Dorsolateral prefrontal cortex (tissue), 120 donors: ENCODE measurements at regions of chr2 and their contacts with region 1.

Region 1: DNA sequence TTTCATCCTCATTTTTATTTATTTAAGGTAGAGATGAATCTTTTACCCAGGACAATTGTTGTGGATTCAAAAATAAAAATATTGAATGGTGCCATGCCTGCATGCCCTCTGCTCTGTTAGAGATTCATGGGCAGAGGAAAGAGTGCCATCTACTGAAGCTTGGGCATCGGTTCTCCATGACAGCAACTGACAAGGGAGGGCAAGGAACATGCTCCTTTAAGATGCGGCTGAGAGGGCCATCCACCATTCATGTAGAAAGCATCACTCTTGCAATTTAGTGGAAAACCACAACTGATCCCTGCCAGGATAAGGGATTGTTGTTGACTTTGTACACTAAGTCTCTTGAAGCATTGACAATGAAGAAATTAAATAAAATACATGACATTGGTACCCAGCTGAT is 79.9 kb downstream of the PARD3B start:
- DNase-seq: peak in 4 of 10 donors; percentile 8 to 46 (median 36)
- H3K4me3 ChIP-seq: no peak overlapping the region
- H3K27ac ChIP-seq: no peak overlapping the region
- H3K27me3 ChIP-seq: no peaks in the 10 kb centered on the region
- CTCF ChIP-seq: peak in 51 of 56 donors; percentile 20 to 78 (median 48)

Region 2: GRCh38 chr2:204110338-204110741 is 514.8 kb before region 1 on chr2:
- intact Hi-C with region 1: loop called in 1 of 2 experiments (anchors 10 kb)
- DNase-seq: no peak
- H3K4me3 ChIP-seq: no peak overlapping the region
- H3K27ac ChIP-seq: peak overlapping the region in 2 of 59 donors; percentile 7 to 42
- H3K27me3 ChIP-seq: peaks cover 0 to 10% (median 0%) of the 10 kb centered on the region in 45 donors
- CTCF ChIP-seq: no peak

Region 3: GRCh38 chr2:204251158-204251997 is 373.8 kb before region 1 on chr2:
- intact Hi-C with region 1: loop called in 1 of 2 experiments (anchors 5 kb)
- DNase-seq: no peak
- H3K4me3 ChIP-seq: no peak overlapping the region
- H3K27ac ChIP-seq: no peak overlapping the region
- H3K27me3 ChIP-seq: peaks cover 0 to 7% (median 0%) of the 10 kb centered on the region in 45 donors
- CTCF ChIP-seq: no peak

Region 4: DNA sequence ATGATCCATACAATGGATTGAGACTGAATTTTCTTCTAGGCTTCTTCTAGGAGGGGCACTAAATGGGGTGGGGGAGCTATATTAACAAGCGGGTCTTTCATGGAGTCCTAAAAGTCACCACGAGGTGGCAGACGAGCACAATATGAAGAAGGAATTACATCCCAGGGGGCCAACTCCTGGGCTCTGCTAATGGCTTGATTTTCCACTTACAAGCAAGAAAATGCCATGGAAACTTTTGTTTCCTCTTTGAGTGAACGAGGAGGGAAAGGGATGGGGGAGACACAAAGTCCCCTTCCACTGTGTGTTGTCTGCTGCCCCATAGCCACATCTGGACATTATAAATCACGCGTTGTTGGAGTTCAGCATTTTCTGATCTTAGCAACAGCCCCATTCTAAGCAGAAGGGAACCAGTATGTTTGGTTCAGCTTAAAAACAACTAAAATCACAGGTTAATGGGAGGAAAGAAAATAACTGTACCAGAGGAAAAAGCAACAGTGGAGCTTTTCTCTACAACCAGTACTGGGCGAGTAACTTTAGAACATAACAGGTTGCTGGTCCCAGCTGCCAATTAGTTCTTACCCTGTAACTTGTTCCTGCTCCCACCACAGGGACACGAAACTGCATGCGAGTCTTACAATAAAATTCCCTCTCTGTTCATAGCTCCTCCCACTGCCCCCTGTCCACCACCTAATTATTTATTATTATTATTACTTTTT is 364.8 kb before region 1 on chr2:
- intact Hi-C with region 1: loop called (anchors 5 to 10 kb)
- DNase-seq: peak; percentile 15 to 85 (median 60)
- H3K4me3 ChIP-seq: peak overlapping the region in 3 of 59 donors; percentile 8 to 23 (median 19)
- H3K27ac ChIP-seq: peak overlapping the region in 12 of 59 donors; percentile 0 to 78 (median 44)
- H3K27me3 ChIP-seq: no peaks in the 10 kb centered on the region
- CTCF ChIP-seq: peak; percentile 49 to 96 (median 86)

Region 5: GRCh38 chr2:204325468-204325867 is 299.7 kb before region 1 on chr2:
- intact Hi-C with region 1: loop called (anchors 5 to 10 kb)
- DNase-seq: peak in 6 of 10 donors; percentile 18 to 64 (median 46)
- H3K4me3 ChIP-seq: peak overlapping the region in 1 of 59 donors; percentile 9
- H3K27ac ChIP-seq: no peak overlapping the region
- H3K27me3 ChIP-seq: no peaks in the 10 kb centered on the region
- CTCF ChIP-seq: peak; percentile 71 to 99 (median 93)